GM12878 (cell line): ENCODE measurements at regions of chr18 and their contacts with region 1.

Region 1: DNA sequence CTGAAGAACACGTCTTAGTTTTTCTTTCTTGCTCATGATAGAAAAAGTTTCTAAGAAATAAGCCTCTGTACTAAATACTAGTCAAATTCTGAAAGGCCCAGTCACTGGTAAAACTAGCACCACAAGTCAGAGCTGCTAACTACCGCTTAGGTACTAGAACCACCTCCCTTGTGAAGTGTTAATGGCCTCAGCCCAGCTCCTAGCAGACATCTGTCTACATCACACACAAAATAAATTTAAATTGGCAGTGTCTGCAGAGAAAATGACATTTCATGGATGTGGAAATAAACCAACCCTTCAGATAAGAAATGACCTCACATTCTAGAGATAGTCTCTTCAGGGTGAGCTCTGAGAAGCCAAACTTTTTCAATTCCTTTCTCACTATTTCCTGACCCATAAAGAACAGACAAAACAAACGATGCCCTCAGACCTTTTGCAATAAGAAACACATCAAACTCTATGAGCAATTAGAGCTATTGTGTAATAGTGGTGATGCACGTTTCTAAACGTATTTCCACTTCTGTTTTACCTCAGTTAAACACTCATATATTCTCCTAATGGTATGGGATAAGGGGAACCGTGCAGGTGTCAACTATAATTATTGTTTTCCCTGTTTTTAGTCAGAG is 70.3 kb upstream of the DSG1 start:
- DNase-seq: no peak
- ATAC-seq: no peak
- H3K4me3 ChIP-seq: no peak overlapping the region
- H3K27ac ChIP-seq: no peak overlapping the region
- H3K4me1 ChIP-seq: peaks cover 3% of the 10 kb centered on the region; the same call in 1 of the 2 replicates
- H3K27me3 ChIP-seq: no peaks in the 10 kb centered on the region
- CTCF ChIP-seq: no peak
- EP300 ChIP-seq: no peak
- POLR2A ChIP-seq: no peak
- RAD21 ChIP-seq: no peak

Region 2: DNA sequence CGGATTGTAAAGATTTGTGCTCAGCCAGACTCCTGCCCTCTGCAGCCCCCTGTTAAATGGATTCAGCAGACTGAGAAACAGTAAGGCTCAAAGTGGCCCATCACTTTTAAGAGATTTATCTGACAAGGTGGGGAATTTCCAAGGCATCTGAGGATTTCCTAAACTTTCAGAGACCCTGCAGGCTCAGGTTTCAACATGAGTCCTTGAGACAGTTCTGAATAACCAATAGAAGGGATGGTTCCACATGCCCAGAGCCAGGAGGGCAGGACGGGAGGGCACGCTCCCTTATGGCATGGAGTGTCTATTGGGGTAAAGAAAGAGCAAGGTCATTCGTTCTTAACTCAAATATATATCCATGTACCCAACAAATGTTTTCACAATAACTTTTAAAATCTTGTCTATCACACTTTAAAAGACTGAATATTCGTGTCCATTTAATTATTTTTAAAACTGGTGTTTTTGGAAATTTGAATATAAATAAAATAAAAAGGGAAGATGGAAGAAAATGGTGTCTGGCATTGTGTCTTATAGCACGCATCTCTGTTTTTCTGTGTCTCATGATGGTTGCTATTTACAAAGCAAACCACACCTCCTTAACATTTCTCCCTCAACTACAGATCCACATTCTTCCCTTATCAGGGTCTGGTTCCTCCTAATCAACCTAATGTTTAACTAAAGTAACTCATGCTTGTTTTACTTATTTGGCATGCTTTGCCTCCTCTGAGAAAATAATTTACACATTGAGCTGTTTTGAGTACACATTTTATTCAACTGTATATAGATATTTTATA is 14.3 kb after region 1 on chr18:
- CTCF ChIA-PET with region 1: interaction called, 8 read pairs
- POLR2A ChIA-PET with region 1: interaction called, 10 read pairs
- RAD21 ChIA-PET with region 1: interaction called, 4 read pairs
- SMC1A ChIA-PET with region 1: interaction called, 64 read pairs
- in situ Hi-C with region 1: no loop called
- intact Hi-C with region 1: no loop called
- DNase-seq: no peak
- ATAC-seq: peak; percentile 47
- H3K4me3 ChIP-seq: no peak overlapping the region
- H3K27ac ChIP-seq: no peak overlapping the region
- H3K4me1 ChIP-seq: peaks cover 7% of the 10 kb centered on the region
- H3K27me3 ChIP-seq: no peaks in the 10 kb centered on the region
- CTCF ChIP-seq: no peak
- EP300 ChIP-seq: no peak
- POLR2A ChIP-seq: no peak
- RAD21 ChIP-seq: no peak